Activated CD8-positive, alpha-beta T cell treated with anti-CD3 and anti-CD28 coated beads, Interleukin-2, amount 10 ng/mL, durations not matched to agents 7 days and 5 days (primary cell): ENCODE measurements at regions of chr13 and their contacts with region 1.

Region 1: GRCh38 chr13:26872525-26873385 is 112.2 kb upstream of the GPR12 start:
- DNase-seq: peak; percentile 76
- ATAC-seq: peak; percentile 71
- H3K4me3 Mint-ChIP-seq: no peak overlapping the region
- H3K27ac Mint-ChIP-seq: no peak overlapping the region
- H3K4me1 Mint-ChIP-seq: no peaks in the 10 kb centered on the region
- H3K27me3 Mint-ChIP-seq: peaks cover 6% of the 10 kb centered on the region

Region 2: GRCh38 chr13:26707122-26708006 is 165.4 kb before region 1 on chr13:
- CTCF ChIA-PET with region 1: interaction called, 71 read pairs
- POLR2A ChIA-PET with region 1: no interaction called
- DNase-seq: peak; percentile 74
- ATAC-seq: peak; percentile 78
- H3K4me3 Mint-ChIP-seq: no peak overlapping the region
- H3K27ac Mint-ChIP-seq: no peak overlapping the region
- H3K4me1 Mint-ChIP-seq: peaks cover 6% of the 10 kb centered on the region
- H3K27me3 Mint-ChIP-seq: peaks cover 2% of the 10 kb centered on the region

Region 3: GRCh38 chr13:26721251-26722121 is 151.3 kb before region 1 on chr13:
- CTCF ChIA-PET with region 1: interaction called, 12 read pairs
- POLR2A ChIA-PET with region 1: no interaction called
- DNase-seq: peak; percentile 77
- ATAC-seq: peak; percentile 90
- H3K4me3 Mint-ChIP-seq: peak overlapping the region; percentile 70
- H3K27ac Mint-ChIP-seq: peak overlapping the region; percentile 93
- H3K4me1 Mint-ChIP-seq: peaks cover 30% of the 10 kb centered on the region
- H3K27me3 Mint-ChIP-seq: no peaks in the 10 kb centered on the region

Region 4: GRCh38 chr13:26861941-26862340 is 10.8 kb before region 1 on chr13:
- CTCF ChIA-PET with region 1: interaction called, 11 read pairs
- POLR2A ChIA-PET with region 1: no interaction called
- DNase-seq: no peak
- ATAC-seq: no peak
- H3K4me3 Mint-ChIP-seq: no peak overlapping the region
- H3K27ac Mint-ChIP-seq: no peak overlapping the region
- H3K4me1 Mint-ChIP-seq: no peaks in the 10 kb centered on the region
- H3K27me3 Mint-ChIP-seq: peaks cover 2% of the 10 kb centered on the region